ENCODE measurements at regions of chr11 and their contacts with region 1.

Region 1: GRCh38 chr11:57249384-57250319 is 12.6 kb upstream of the APLNR start:
- DNase-seq: peak; percentile 29 to 59
- ATAC-seq: peak in 1 of 3 donors; percentile 58
- H3K4me3 ChIP-seq: no peak overlapping the region
- H3K4me3 Mint-ChIP-seq: no peak overlapping the region
- H3K27ac ChIP-seq: no peak overlapping the region
- H3K27ac Mint-ChIP-seq: no peak overlapping the region
- H3K4me1 ChIP-seq: no peaks in the 10 kb centered on the region
- H3K4me1 Mint-ChIP-seq: peaks cover 11% of the 10 kb centered on the region in 2 donors
- H3K27me3 ChIP-seq: no peaks in the 10 kb centered on the region
- H3K27me3 Mint-ChIP-seq: peaks cover 19 to 35% of the 10 kb centered on the region in 2 donors
- CTCF ChIP-seq: peak; percentile 85

Region 2: DNA sequence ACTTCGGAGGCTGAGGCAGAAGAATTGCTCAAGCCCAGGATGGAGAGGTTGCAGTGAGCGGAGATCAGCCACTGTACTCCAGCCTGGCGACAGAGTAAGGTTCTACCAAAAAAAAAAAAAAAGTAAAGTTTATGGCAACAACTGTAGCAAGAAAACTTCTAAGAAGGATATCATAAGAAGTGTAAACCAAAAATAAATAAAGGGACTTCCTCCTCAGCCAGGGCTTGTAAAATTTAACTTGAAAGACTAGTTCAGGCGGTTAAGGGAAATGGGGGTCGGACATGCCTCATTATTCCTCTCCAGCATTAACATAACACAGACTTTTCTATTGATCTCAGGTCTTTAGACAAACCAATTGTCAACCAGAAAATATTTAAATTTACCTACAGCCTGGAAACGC is 704.1 kb before region 1 on chr11:
- intact Hi-C with region 1: no loop called
- DNase-seq: no peak
- ATAC-seq: no peak
- H3K4me3 ChIP-seq: no peak overlapping the region
- H3K4me3 Mint-ChIP-seq: no peak overlapping the region
- H3K27ac ChIP-seq: no peak overlapping the region
- H3K27ac Mint-ChIP-seq: no peak overlapping the region
- H3K4me1 ChIP-seq: no peaks in the 10 kb centered on the region
- H3K4me1 Mint-ChIP-seq: no peaks in the 10 kb centered on the region
- H3K27me3 ChIP-seq: no peaks in the 10 kb centered on the region
- H3K27me3 Mint-ChIP-seq: no peaks in the 10 kb centered on the region
- CTCF ChIP-seq: no peak

Region 3: GRCh38 chr11:56841210-56841810 is 408.3 kb before region 1 on chr11:
- intact Hi-C with region 1: loop called (anchors 1 kb)
- DNase-seq: peak in 1 of 2 donors; percentile 46
- ATAC-seq: no peak
- H3K4me3 ChIP-seq: no peak overlapping the region
- H3K4me3 Mint-ChIP-seq: no peak overlapping the region
- H3K27ac ChIP-seq: no peak overlapping the region
- H3K27ac Mint-ChIP-seq: no peak overlapping the region
- H3K4me1 ChIP-seq: no peaks in the 10 kb centered on the region
- H3K4me1 Mint-ChIP-seq: no peaks in the 10 kb centered on the region
- H3K27me3 ChIP-seq: no peaks in the 10 kb centered on the region
- H3K27me3 Mint-ChIP-seq: no peaks in the 10 kb centered on the region
- CTCF ChIP-seq: peak; percentile 37

Region 4: GRCh38 chr11:57116654-57117053 is 133.0 kb before region 1 on chr11:
- intact Hi-C with region 1: loop called (anchors 1 kb)
- DNase-seq: peak in 1 of 2 donors; percentile 9
- ATAC-seq: no peak
- H3K4me3 ChIP-seq: no peak overlapping the region
- H3K4me3 Mint-ChIP-seq: no peak overlapping the region
- H3K27ac ChIP-seq: no peak overlapping the region
- H3K27ac Mint-ChIP-seq: no peak overlapping the region
- H3K4me1 ChIP-seq: no peaks in the 10 kb centered on the region
- H3K4me1 Mint-ChIP-seq: no peaks in the 10 kb centered on the region
- H3K27me3 ChIP-seq: no peaks in the 10 kb centered on the region
- H3K27me3 Mint-ChIP-seq: peaks cover 7 to 11% of the 10 kb centered on the region in 2 donors
- CTCF ChIP-seq: no peak

Region 5: DNA sequence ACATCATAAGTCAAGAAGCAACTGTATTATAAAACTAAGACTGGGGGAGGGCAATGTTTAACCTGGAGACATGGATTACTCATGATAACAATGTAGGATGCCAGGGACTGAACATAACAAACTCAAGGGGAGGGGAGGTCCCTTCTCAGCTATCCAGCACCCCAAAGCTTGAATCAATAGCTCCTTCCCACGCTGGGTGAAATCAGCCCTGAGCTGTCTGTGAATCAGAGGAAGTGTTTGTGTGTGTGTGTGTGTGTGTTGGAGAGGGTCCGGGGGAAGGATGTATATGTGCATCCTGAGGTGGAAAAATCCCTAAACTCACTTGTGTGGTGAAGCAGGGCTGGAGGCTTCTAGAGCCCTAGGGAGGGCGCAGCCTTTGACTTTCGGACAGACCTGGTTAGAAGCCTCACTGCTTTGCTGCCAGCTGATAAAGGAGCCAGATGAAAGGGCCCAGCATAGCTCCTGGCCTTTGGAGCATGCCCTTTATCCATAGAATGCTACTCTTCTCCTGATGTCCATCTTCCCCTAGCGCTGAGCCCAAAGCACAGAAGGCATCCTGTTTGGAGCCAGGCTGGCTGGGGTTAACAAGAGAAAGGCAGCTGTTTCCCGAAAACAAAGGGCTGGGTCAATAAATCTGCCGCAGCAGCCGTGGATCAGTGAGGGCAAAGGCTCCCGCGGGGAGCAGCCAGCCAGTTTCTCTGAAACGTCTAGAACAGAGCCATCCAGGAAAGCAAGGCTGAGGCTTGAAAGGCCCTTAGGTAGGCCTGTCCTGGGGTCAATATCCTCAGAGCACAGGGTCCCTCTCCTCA is 39.3 kb after region 1 on chr11:
- intact Hi-C with region 1: no loop called
- DNase-seq: no peak
- ATAC-seq: no peak
- H3K4me3 ChIP-seq: no peak overlapping the region
- H3K4me3 Mint-ChIP-seq: no peak overlapping the region
- H3K27ac ChIP-seq: no peak overlapping the region
- H3K27ac Mint-ChIP-seq: no peak overlapping the region
- H3K4me1 ChIP-seq: no peaks in the 10 kb centered on the region
- H3K4me1 Mint-ChIP-seq: no peaks in the 10 kb centered on the region
- H3K27me3 ChIP-seq: no peaks in the 10 kb centered on the region
- H3K27me3 Mint-ChIP-seq: peaks cover 3 to 22% of the 10 kb centered on the region in 2 donors
- CTCF ChIP-seq: no peak

Measured in natural killer cell (primary cell).